Activated naive CD8-positive, alpha-beta T cell treated with anti-CD3 and anti-CD28 coated beads, Interleukin-2, amount 10 ng/mL, durations not matched to agents 7 days and 5 days (primary cell): ENCODE measurements at regions of chr2 and their contacts with region 1.

Region 1: DNA sequence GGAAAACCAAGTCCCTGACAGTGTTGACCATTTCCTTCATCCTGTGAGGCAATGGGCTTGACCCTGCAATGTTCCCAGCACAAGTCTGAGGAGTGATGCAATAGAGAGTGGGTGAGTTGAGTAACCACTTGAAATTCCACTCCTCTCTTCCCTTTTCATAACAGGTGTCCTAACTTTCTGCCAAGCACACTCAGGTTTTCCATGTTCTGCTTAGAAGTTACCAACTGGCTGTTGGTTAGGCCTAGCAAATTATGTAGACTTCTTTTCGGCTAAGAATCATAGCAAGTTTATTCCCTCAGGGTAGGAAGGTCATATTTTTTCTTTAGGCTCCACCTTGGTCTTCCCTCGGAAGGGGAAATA is 11.5 kb downstream of the GNLY start:
- DNase-seq: no peak
- ATAC-seq: no peak
- H3K4me3 Mint-ChIP-seq: no peak overlapping the region
- H3K27ac Mint-ChIP-seq: peak overlapping the region; percentile 51
- H3K4me1 Mint-ChIP-seq: peaks cover 47% of the 10 kb centered on the region
- H3K27me3 Mint-ChIP-seq: peaks cover 17% of the 10 kb centered on the region

Region 2: GRCh38 chr2:85678794-85679672 is 26.6 kb before region 1 on chr2:
- POLR2A ChIA-PET with region 1: interaction called, 15 read pairs
- DNase-seq: peak; percentile 89
- ATAC-seq: peak; percentile 85
- H3K4me3 Mint-ChIP-seq: peak overlapping the region; percentile 14
- H3K27ac Mint-ChIP-seq: no peak overlapping the region
- H3K4me1 Mint-ChIP-seq: peaks cover 19% of the 10 kb centered on the region
- H3K27me3 Mint-ChIP-seq: peaks cover 12% of the 10 kb centered on the region